Right ventricle myocardium inferior (tissue), 1 donor: ENCODE measurements at regions of chr10 and their contacts with region 1.

Region 1: GRCh38 chr10:80580638-80581468 is 43.2 kb downstream of the SH2D4B start:
- DNase-seq: no peak
- ATAC-seq: no peak

Region 2: GRCh38 chr10:80535671-80536365 is 45.0 kb before region 1 on chr10:
- intact Hi-C with region 1: loop called (anchors 5 kb)
- DNase-seq: peak; percentile 77
- ATAC-seq: peak; percentile 85

Region 3: GRCh38 chr10:80632742-80633141 is 51.9 kb after region 1 on chr10:
- intact Hi-C with region 1: no loop called
- DNase-seq: no peak
- ATAC-seq: no peak

Region 4: GRCh38 chr10:81073155-81073554 is 492.3 kb after region 1 on chr10:
- intact Hi-C with region 1: no loop called
- DNase-seq: no peak
- ATAC-seq: no peak